Ovary (tissue), 10 donors: ENCODE measurements at regions of chr18 and their contacts with region 1.

Region 1: DNA sequence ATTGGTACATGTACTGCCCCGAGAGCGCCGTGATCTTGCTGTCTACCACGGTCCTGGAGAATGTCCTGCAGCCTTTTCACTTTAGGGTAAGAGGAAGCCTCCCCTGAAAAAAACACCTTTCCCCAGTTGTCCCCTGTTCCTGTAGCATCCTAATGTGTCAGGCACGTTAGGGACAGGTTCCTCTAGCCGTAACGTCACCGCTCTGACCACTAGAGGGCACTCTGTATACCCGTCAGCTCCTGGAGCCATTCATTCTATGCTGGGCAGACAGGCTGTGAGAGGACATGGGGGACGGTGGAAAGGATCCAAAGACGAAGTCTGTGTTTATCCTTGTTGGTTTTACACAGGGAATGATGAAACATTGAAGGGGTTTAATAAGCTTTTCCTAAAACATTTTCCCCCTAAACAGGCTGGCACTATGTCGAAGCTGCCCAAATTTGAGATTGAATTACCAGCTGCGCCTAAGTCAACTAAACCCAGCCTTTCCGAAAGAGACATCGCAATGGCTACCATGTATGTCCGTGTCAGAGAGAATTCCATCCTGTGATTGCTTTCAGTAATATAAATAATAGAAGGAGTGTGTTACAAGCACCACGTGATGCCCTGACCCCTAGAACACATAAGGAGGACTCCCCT is 12.7 kb downstream of the RMC1 start:
- DNase-seq: peak; percentile 66 to 77 (median 73)
- H3K4me3 ChIP-seq: no peak overlapping the region
- H3K27ac ChIP-seq: no peak overlapping the region
- H3K4me1 ChIP-seq: peaks cover 3% of the 10 kb centered on the region
- H3K27me3 ChIP-seq: no peaks in the 10 kb centered on the region
- CTCF ChIP-seq: peak; percentile 57 to 82 (median 72)
- EP300 ChIP-seq: no peak
- POLR2A ChIP-seq: no peak

Region 2: GRCh38 chr18:21803495-21803894 is 1712.5 kb before region 1 on chr18:
- intact Hi-C with region 1: no loop called
- DNase-seq: no peak
- H3K4me3 ChIP-seq: no peak overlapping the region
- H3K27ac ChIP-seq: no peak overlapping the region
- H3K4me1 ChIP-seq: no peaks in the 10 kb centered on the region
- H3K27me3 ChIP-seq: no peaks in the 10 kb centered on the region
- CTCF ChIP-seq: no peak
- EP300 ChIP-seq: no peak
- POLR2A ChIP-seq: no peak

Region 3: GRCh38 chr18:21820035-21820810 is 1695.8 kb before region 1 on chr18:
- intact Hi-C with region 1: no loop called
- DNase-seq: no peak
- H3K4me3 ChIP-seq: no peak overlapping the region
- H3K27ac ChIP-seq: no peak overlapping the region
- H3K4me1 ChIP-seq: no peaks in the 10 kb centered on the region
- H3K27me3 ChIP-seq: no peaks in the 10 kb centered on the region
- CTCF ChIP-seq: no peak
- EP300 ChIP-seq: no peak
- POLR2A ChIP-seq: no peak

Region 4: GRCh38 chr18:23586249-23587196 is 70.5 kb after region 1 on chr18 and contains the start of gene NPC1:
- intact Hi-C with region 1: loop called in 3 of 4 experiments (anchors 2 to 10 kb)
- DNase-seq: peak; percentile 93 to 96 (median 94)
- H3K4me3 ChIP-seq: peak within 1 kb of the TSS; percentile 86
- H3K27ac ChIP-seq: peak within 1 kb of the TSS; percentile 98
- H3K4me1 ChIP-seq: no peaks in the 10 kb centered on the region
- H3K27me3 ChIP-seq: no peaks in the 10 kb centered on the region
- CTCF ChIP-seq: peak; percentile 66 to 95 (median 92)
- EP300 ChIP-seq: peak; percentile 31
- POLR2A ChIP-seq: peak; percentile 86
- total RNA-seq, gene NPC1: 21.8 to 54.5 (median 29.8) TPM

Region 5: DNA sequence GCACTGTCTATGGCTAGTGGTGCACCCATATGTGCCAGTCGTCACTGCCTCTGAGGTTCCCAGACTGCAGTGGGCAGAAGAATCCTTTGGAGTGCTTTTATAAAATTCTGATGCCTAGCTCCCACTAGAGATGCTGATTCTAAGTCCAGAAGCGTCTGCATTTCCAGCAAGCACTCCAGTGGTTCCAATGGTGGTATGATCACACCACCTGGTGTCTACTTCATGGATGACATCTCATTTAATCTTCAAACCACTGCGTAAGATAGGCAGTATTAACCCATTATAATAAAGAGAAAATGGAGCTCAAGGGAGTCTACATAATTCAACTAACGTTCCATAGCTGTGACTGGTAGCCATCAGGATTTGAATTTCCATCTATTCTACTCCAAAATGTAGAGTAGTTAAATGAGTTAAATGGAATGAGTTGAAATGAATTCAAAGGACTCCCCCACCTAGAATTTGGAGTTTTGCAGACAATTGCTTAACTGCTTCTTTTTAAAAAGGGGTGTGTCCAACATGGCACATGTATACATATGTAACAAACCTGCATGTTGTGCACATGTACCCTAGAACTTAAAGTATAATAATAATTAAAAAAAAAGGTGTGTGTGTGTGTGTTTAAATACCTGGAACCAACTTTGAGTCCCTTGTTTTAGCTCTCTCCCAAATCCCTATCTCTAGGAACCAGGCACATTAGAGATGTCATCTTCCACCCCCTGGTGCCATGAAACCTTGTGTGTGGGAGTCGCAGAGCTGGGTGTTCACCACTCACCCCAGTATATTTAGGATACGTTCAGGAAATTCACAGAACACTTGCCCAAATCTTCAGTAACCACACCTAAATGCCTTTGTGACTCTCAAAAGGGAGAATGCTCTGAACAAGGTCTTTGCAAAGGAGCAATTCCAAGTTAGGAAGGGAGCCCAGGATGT is 187.3 kb after region 1 on chr18:
- intact Hi-C with region 1: loop called in 1 of 4 experiments (anchors 10 kb)
- DNase-seq: no peak
- H3K4me3 ChIP-seq: no peak overlapping the region
- H3K27ac ChIP-seq: no peak overlapping the region
- H3K4me1 ChIP-seq: no peaks in the 10 kb centered on the region
- H3K27me3 ChIP-seq: no peaks in the 10 kb centered on the region
- CTCF ChIP-seq: peak in 2 of 3 donors; percentile 38 to 41
- EP300 ChIP-seq: no peak
- POLR2A ChIP-seq: no peak